Heart right ventricle (tissue), 16 donors: ENCODE measurements at regions of chr17 and their contacts with region 1.

Region 1: DNA sequence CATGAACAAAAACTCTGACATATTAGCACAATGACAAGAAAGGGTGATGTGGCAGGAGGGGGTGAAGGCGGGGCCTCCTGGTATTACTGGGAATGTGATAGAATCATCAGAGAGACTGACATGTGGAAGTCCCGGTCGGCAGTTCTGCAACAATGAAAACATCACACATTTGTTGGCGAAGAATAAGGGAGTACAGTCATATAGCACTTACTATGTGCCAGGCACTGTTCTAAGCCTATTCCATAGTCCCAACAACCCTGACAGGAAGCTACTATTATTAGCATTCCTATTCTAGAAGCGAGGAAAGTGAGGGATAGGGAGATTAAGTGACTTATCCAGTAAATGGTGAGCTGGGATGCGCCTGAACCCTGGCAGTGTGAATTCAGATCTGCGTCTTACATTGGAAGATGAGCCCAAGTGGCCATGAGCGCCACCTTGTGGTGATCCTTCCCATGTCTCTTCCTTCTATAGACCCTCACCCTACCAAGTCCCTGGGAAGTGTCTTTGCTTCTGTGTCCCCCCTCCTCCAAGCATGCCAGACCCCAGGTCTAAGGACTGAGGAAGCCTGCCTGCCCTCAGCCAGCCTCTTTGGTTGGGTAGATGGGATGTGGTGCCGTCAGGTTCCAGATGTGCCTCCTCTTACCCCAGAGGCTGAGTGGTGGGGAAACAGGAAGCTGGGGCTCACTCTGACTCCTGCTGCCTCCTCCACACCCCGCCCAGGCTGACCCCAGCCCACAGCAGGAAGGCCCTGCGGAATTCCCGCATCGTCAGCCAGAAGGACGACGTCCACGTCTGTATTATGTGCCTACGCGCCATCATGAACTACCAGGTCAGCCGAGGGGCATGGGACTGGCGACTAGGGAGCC is 14.0 kb downstream of the FMNL1 start:
- DNase-seq: peak; percentile 70 to 74
- ATAC-seq: peak in 7 of 8 donors; percentile 32 to 64 (median 49)
- H3K4me3 ChIP-seq: no peak overlapping the region
- H3K27ac ChIP-seq: peak overlapping the region in 1 of 10 donors; percentile 52
- H3K4me1 ChIP-seq: peaks cover 0 to 39% (median 11%) of the 10 kb centered on the region in 9 donors
- H3K27me3 ChIP-seq: no peaks in the 10 kb centered on the region
- CTCF ChIP-seq: peak; percentile 60 to 88 (median 79)

Region 2: DNA sequence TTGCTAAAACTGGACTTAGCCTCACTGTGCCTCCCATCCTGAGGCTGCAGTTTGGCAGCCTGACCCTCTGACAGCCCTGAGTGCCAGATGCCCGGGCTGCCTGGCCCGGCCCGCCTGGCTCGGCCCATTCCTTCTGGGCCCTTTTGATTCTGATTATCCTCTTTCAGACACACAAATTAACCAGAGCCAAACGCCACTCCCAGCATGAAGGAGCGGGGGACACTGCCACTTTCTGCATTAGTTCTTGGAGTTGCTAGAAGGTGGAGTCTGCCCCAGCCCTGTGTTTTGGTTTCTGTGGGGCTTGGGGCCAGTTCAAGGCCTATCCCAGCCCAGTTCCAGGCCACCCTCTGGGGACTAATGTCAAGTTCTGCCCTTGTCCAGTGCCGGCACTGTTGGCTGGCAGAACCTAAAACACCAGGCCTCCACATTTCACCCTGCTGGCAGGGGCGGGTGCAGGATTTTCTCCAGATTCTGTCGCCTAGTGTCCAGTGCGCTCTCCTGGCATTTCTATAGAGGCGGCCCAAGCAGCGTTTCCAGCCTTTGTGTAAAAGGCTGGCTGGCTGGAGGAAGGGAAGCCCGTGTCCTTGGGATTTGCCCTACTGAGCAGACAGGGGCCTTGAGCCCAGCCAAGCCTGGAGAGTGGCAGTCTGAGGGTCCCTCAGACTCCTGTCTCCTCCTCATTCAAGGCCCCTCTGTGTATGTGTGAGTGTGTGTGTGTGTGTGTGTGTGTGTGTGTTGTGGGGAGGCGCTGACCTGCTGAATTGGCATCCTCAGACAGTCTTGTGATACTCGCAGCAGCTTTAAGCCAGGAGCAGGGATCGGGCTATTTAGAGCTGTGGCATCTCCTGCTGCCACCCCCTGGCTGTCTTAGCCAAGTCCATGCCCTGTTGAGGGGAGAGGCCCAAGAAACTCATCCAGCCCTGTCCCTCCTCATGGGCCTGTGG is 124.7 kb before region 1 on chr17:
- intact Hi-C with region 1: no loop called
- DNase-seq: peak in 1 of 2 donors; percentile 76
- ATAC-seq: peak; percentile 67 to 90 (median 81)
- H3K4me3 ChIP-seq: no peak overlapping the region
- H3K27ac ChIP-seq: peak overlapping the region; percentile 62 to 94 (median 88)
- H3K4me1 ChIP-seq: peaks cover 5 to 66% (median 33%) of the 10 kb centered on the region in 9 donors
- H3K27me3 ChIP-seq: no peaks in the 10 kb centered on the region
- CTCF ChIP-seq: peak in 1 of 9 donors; percentile 35

Region 3: DNA sequence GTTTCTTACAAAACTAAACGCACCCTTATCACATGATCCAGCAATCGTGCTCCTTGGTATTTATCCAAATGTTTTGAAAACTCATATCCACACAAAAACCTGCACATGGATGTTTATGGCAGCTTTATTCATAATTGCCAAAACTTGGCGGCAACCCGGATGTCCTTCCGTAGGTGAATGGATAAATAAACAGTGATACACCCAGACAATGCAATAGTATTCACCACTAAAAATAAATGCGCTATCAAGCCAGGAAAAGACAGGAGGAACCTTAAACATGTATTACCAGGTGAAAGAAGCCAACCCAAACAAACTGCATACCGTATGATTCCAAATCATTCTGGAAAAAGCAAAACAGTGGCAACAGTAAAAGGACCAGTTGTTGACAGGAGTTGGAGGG is 16.3 kb after region 1 on chr17:
- intact Hi-C with region 1: loop called in 1 of 10 experiments (anchors 1 kb)
- DNase-seq: no peak
- ATAC-seq: no peak
- H3K4me3 ChIP-seq: no peak overlapping the region
- H3K27ac ChIP-seq: no peak overlapping the region
- H3K4me1 ChIP-seq: peaks cover 2 to 34% (median 16%) of the 10 kb centered on the region in 9 donors
- H3K27me3 ChIP-seq: no peaks in the 10 kb centered on the region
- CTCF ChIP-seq: no peak

Region 4: DNA sequence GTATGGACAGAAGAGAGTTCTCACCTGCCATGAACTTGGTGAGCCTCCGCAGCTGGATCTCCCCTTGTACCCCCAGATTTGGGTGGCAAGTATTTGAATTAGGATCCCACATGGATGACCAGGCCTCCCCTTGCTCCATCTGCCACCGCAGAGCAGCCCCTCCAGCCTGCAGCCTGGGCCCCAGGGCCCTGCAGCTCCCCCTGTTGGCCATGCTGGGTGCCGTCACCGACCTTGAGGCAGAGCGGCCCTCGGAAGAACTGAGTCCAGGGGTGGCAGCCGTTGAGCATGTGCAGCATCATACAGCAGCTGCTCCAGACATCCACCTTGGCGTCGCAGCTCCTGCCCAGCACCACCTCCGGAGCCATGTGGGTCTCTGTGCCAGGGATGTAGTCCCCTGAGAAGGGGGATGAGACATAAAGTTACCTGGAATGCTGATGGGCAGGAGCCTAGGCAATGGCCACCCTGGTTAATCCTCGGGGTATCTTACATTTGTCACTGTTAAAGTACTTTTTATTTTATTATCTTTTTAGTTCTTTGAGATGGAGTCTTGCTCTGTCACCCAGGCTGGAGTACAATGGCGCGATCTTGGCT is 35.3 kb after region 1 on chr17:
- intact Hi-C with region 1: loop called in 1 of 10 experiments (anchors 5 kb)
- DNase-seq: no peak
- ATAC-seq: peak in 3 of 8 donors; percentile 24 to 38 (median 29)
- H3K4me3 ChIP-seq: no peak overlapping the region
- H3K27ac ChIP-seq: no peak overlapping the region
- H3K4me1 ChIP-seq: peaks cover 0 to 15% (median under 1%) of the 10 kb centered on the region in 9 donors
- H3K27me3 ChIP-seq: no peaks in the 10 kb centered on the region
- CTCF ChIP-seq: peak; percentile 20 to 66 (median 52)

Region 5: GRCh38 chr17:45385331-45385997 is 149.8 kb after region 1 on chr17:
- intact Hi-C with region 1: loop called in 2 of 10 experiments (anchors 1 to 5 kb)
- DNase-seq: peak; percentile 90 to 91
- ATAC-seq: peak; percentile 91 to 97 (median 95)
- H3K4me3 ChIP-seq: no peak overlapping the region
- H3K27ac ChIP-seq: peak overlapping the region in 1 of 10 donors; percentile 49
- H3K4me1 ChIP-seq: peaks cover 0 to 47% (median 20%) of the 10 kb centered on the region in 9 donors
- H3K27me3 ChIP-seq: peaks cover 0 to 8% (median 0%) of the 10 kb centered on the region in 7 donors
- CTCF ChIP-seq: peak; percentile 96 to 100 (median 98)

Region 6: GRCh38 chr17:45440155-45440778 is 204.6 kb after region 1 on chr17:
- intact Hi-C with region 1: no loop called
- DNase-seq: no peak
- ATAC-seq: no peak
- H3K4me3 ChIP-seq: no peak overlapping the region
- H3K27ac ChIP-seq: no peak overlapping the region
- H3K4me1 ChIP-seq: peaks cover 0 to 11% (median under 1%) of the 10 kb centered on the region in 9 donors
- H3K27me3 ChIP-seq: no peaks in the 10 kb centered on the region
- CTCF ChIP-seq: no peak